T-cell (primary cell): ENCODE measurements at regions of chr16 and their contacts with region 1.

Region 1: DNA sequence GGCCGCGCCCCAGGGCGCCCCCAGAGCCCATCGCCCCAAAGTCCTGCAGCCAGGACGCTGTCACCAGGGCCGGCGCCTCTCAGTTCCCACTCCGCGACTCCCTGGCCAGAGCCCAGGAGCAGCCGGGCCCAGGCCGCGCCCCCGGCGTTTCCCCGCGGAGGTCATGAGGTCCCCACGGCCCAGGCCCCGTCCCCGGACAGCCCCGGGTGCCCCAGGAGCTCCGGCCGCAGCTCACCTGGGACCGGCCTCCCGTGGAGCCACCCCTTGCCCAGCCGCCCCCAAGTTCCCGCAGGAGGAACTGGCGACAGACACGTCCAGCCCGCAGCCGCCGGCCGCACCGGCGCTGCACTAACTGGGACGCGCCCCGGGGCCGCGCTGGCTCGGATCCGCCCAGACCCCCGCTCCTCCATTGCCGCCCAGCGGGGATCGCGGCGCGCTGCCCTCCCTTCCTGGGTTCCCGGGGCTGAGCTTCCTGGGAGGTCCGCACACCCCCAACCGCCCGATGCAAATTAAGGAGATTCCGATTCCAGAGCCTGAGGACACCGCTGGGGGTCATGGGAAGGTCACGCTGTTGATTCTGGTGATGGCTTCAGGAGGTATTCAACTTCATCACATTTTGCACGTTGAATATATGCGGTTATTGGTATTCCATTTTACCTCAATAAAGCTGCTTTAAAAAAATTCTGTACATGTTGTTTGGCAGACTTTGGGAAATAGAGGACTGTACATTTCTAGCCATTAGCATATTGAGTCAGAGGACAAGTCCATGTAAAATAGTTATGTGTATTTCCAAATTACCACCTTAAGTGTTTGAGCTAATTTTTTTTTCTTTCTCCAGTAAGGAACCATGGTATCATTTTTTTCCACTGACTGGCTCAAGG is 9.9 kb downstream of the AHSP start:
- DNase-seq: no peak
- ATAC-seq: no peak
- H3K4me3 ChIP-seq: peak overlapping the region in 1 of 2 donors; percentile 17
- H3K4me3 Mint-ChIP-seq: peak overlapping the region in 1 of 3 donors; percentile 66
- H3K27ac ChIP-seq: no peak overlapping the region
- H3K27ac Mint-ChIP-seq: no peak overlapping the region
- H3K4me1 ChIP-seq: peaks cover 0 to 3% of the 10 kb centered on the region in 2 experiments
- H3K4me1 Mint-ChIP-seq: peaks cover 0 to 7% (median 7%) of the 10 kb centered on the region in 3 donors
- H3K27me3 ChIP-seq: peaks cover 0 to 54% of the 10 kb centered on the region in 2 experiments
- H3K27me3 Mint-ChIP-seq: peaks cover 49 to 57% of the 10 kb centered on the region in 2 donors

Region 2: DNA sequence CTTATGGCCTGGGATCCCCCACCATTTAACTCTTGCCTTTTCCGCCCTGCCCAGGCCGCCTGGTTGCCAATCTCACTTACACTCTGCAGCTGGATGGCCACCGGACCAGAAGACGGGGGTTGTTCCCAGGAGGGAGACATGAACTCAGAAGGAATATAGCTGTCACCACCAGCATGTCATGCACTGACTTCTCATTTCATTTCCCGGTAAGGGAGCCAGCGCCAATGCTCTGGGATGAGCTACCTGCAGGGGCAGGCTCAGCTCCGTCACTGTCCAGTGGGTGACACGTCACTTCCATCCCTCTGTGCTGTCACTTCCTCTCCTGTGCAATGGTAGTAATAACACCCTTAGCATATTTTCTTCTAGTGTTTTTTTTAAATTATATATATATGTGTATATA is 1038.3 kb before region 1 on chr16:
- CTCF ChIA-PET with region 1: no interaction called
- POLR2A ChIA-PET with region 1: interaction called in 1 of 2 experiments, 10 read pairs
- DNase-seq: no peak
- ATAC-seq: no peak
- H3K4me3 ChIP-seq: no peak overlapping the region
- H3K4me3 Mint-ChIP-seq: no peak overlapping the region
- H3K27ac ChIP-seq: no peak overlapping the region
- H3K27ac Mint-ChIP-seq: peak overlapping the region in 1 of 2 donors; percentile 59
- H3K4me1 ChIP-seq: peaks cover 0 to 13% of the 10 kb centered on the region in 2 experiments
- H3K4me1 Mint-ChIP-seq: peaks cover 2 to 9% (median 7%) of the 10 kb centered on the region in 3 donors
- H3K27me3 ChIP-seq: no peaks in the 10 kb centered on the region
- H3K27me3 Mint-ChIP-seq: no peaks in the 10 kb centered on the region

Region 3: GRCh38 chr16:31522071-31522470 is 15.5 kb before region 1 on chr16:
- CTCF ChIA-PET with region 1: no interaction called
- POLR2A ChIA-PET with region 1: no interaction called
- DNase-seq: no peak
- ATAC-seq: no peak
- H3K4me3 ChIP-seq: no peak overlapping the region
- H3K4me3 Mint-ChIP-seq: no peak overlapping the region
- H3K27ac ChIP-seq: no peak overlapping the region
- H3K27ac Mint-ChIP-seq: no peak overlapping the region
- H3K4me1 ChIP-seq: no peaks in the 10 kb centered on the region
- H3K4me1 Mint-ChIP-seq: no peaks in the 10 kb centered on the region
- H3K27me3 ChIP-seq: peaks cover 0 to 7% of the 10 kb centered on the region in 2 experiments
- H3K27me3 Mint-ChIP-seq: peaks cover 0 to 7% of the 10 kb centered on the region in 2 donors

Region 4: DNA sequence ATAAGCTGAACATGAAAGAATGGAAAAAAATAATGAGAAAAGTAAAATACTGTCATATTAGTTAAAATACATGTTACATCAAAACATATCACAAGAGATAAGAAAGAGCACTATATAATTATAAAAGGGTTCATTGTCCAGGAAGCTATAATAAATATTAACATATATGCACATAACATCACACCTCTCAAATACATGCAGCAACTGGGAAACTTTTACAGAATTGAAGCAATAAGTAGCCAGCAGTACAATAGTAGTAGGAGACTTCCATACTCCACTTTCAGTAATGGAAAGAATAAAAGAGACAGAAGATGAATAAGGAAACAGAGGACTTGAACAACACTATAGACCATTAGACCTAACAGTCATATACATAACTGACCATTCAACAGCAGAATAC is 80.5 kb after region 1 on chr16:
- CTCF ChIA-PET with region 1: no interaction called
- POLR2A ChIA-PET with region 1: no interaction called
- DNase-seq: no peak
- ATAC-seq: no peak
- H3K4me3 ChIP-seq: no peak overlapping the region
- H3K4me3 Mint-ChIP-seq: no peak overlapping the region
- H3K27ac ChIP-seq: no peak overlapping the region
- H3K27ac Mint-ChIP-seq: no peak overlapping the region
- H3K4me1 ChIP-seq: no peaks in the 10 kb centered on the region
- H3K4me1 Mint-ChIP-seq: no peaks in the 10 kb centered on the region
- H3K27me3 ChIP-seq: no peaks in the 10 kb centered on the region
- H3K27me3 Mint-ChIP-seq: peaks cover 5 to 20% of the 10 kb centered on the region in 2 donors

Region 5: GRCh38 chr16:31754998-31755615 is 217.5 kb after region 1 on chr16:
- CTCF ChIA-PET with region 1: no interaction called
- POLR2A ChIA-PET with region 1: no interaction called
- DNase-seq: no peak
- ATAC-seq: no peak
- H3K4me3 ChIP-seq: no peak overlapping the region
- H3K4me3 Mint-ChIP-seq: no peak overlapping the region
- H3K27ac ChIP-seq: no peak overlapping the region
- H3K27ac Mint-ChIP-seq: no peak overlapping the region
- H3K4me1 ChIP-seq: no peaks in the 10 kb centered on the region
- H3K4me1 Mint-ChIP-seq: no peaks in the 10 kb centered on the region
- H3K27me3 ChIP-seq: no peaks in the 10 kb centered on the region
- H3K27me3 Mint-ChIP-seq: no peaks in the 10 kb centered on the region